ENCODE measurements at regions of chr1 and their contacts with region 1.

Region 1: DNA sequence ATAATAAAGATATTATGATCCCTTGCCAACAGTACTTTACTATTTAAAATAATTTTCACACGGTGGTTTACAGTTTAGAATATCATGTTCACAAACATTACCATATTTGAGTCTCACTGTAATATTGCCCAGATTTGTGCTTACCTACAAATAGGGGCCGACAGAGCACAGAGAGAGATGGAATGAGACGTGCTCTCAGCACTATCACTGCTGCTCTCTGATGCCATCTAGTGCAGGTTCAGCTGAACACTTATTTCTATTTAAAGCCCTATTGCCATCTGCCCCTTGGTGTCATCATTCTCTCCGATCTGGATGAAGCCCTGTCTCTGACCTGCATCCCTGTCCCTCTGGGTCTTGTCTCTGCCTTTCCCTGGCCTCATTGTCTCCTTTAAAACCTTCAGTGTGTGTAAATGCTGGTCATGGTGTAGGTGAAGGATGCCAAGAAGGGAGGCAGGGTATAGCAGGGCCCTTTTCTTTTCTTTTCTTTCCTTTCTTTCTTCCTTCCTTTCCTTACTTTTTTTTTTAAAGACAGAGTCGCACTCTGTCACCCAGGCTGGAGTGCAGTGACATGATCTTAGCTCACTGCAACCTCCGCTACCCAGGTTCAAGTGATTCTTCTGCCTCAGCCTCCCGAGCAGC is 6.9 kb upstream of the GPATCH4 start:
- DNase-seq: peak; percentile 68 to 75 (median 71)
- H3K4me3 ChIP-seq: no peak overlapping the region
- H3K4me3 Mint-ChIP-seq: no peak overlapping the region
- H3K27ac ChIP-seq: no peak overlapping the region
- H3K27ac Mint-ChIP-seq: peak overlapping the region in 2 of 7 donors; percentile 5 to 46
- H3K4me1 ChIP-seq: peaks cover under 1% of the 10 kb centered on the region
- H3K4me1 Mint-ChIP-seq: peaks cover 2 to 9% (median 7%) of the 10 kb centered on the region in 4 donors
- H3K27me3 ChIP-seq: no peaks in the 10 kb centered on the region
- H3K27me3 Mint-ChIP-seq: peaks cover 7% of the 10 kb centered on the region in 2 donors

Region 2: DNA sequence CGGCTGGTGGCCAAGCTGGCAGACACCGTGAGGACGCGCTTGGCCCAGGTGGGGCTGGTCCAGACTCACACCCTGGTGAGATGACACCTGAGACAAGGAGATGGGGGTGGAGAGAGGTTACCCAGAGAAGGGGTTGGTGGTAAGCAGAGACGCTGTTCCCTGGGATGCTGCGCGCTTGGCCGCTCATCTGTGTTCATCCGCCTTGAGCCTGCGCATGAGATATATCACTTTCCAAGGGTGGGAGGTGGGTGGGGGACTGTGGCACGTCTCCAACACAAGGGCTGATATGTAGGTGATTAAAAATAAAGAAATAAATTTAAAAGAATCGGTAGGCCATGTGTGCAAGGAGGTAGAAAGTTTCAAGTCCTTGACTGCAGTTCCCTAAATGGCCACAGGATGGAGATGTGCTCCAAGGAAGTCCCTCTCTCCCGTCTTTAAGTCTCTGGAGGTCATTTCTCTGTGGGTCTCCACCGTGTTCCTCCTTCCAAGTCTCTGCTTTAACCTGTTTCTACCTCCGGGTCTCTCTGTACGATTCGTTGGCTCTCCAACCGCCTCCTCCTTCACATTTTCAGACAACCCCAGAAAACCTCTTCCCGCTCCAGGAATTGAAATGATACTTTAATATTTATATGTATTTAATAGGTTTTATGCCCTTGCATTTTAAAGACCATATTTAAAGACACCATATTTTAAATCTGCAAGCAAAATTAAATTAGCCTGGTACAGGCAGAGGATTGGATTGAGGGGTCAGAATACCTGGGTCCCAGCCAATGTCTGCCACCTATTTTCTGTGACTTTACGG is 24.1 kb before region 1 on chr1:
- CTCF ChIA-PET with region 1: interaction called, 24 read pairs
- POLR2A ChIA-PET with region 1: interaction called, 3 read pairs
- intact Hi-C with region 1: loop called (anchors 1 kb)
- DNase-seq: peak; percentile 65 to 75 (median 71)
- H3K4me3 ChIP-seq: no peak overlapping the region
- H3K4me3 Mint-ChIP-seq: no peak overlapping the region
- H3K27ac ChIP-seq: no peak overlapping the region
- H3K27ac Mint-ChIP-seq: no peak overlapping the region
- H3K4me1 ChIP-seq: no peaks in the 10 kb centered on the region
- H3K4me1 Mint-ChIP-seq: peaks cover 0 to 2% (median under 1%) of the 10 kb centered on the region in 4 donors
- H3K27me3 ChIP-seq: no peaks in the 10 kb centered on the region
- H3K27me3 Mint-ChIP-seq: peaks cover 0 to 2% of the 10 kb centered on the region in 2 donors

Region 3: DNA sequence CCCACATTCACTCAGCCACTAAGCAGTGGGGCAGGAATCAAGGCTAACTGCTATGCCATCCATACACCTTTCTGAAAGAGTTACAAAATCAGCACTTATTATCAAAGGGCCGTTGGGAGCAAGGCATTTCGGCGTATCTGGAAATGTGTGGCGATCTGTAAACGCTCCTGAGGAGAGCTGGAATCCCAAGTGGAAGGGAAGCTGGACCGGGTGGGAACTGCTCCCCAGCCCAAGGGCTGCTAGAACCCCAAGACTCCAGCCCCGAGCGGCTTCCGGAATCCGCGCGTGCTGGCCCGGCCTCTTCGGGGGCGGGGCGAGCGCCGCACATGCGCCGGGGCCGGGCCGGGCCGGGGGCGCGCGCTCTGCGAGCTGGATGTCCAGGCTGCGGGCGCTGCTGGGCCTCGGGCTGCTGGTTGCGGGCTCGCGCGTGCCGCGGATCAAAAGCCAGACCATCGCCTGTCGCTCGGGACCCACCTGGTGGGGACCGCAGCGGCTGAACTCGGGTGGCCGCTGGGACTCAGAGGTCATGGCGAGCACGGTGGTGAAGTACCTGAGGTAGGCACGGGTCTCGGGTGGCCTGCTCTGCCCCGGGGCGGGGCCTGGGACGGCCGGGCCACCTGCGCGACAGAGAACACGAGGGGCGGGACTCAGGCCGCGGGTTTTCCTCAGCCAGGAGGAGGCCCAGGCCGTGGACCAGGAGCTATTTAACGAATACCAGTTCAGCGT is 16.6 kb before region 1 on chr1 and contains the start of gene NAXE:
- CTCF ChIA-PET with region 1: interaction called, 26 read pairs
- POLR2A ChIA-PET with region 1: interaction called, 12 read pairs
- intact Hi-C with region 1: no loop called
- DNase-seq: peak; percentile 66 to 72 (median 67)
- H3K4me3 ChIP-seq: peak within 1 kb of the TSS; percentile 80 to 95
- H3K4me3 Mint-ChIP-seq: peak within 1 kb of the TSS; percentile 89 to 92 (median 90)
- H3K27ac ChIP-seq: peak within 1 kb of the TSS; percentile 81
- H3K27ac Mint-ChIP-seq: peak within 1 kb of the TSS; percentile 86 to 97 (median 94)
- H3K4me1 ChIP-seq: peaks cover 16% of the 10 kb centered on the region
- H3K4me1 Mint-ChIP-seq: peaks cover 13 to 25% (median 21%) of the 10 kb centered on the region in 4 donors
- H3K27me3 ChIP-seq: no peaks in the 10 kb centered on the region
- H3K27me3 Mint-ChIP-seq: no peaks in the 10 kb centered on the region
- total RNA-seq, gene NAXE: 46.7 to 49.5 TPM

Measured in CD4-positive, alpha-beta memory T cell (primary cell).